Activated CD8-positive, alpha-beta T cell treated with anti-CD3 and anti-CD28 coated beads for 36 hours (primary cell): ENCODE measurements at regions of chr12 and their contacts with region 1.

Region 1: DNA sequence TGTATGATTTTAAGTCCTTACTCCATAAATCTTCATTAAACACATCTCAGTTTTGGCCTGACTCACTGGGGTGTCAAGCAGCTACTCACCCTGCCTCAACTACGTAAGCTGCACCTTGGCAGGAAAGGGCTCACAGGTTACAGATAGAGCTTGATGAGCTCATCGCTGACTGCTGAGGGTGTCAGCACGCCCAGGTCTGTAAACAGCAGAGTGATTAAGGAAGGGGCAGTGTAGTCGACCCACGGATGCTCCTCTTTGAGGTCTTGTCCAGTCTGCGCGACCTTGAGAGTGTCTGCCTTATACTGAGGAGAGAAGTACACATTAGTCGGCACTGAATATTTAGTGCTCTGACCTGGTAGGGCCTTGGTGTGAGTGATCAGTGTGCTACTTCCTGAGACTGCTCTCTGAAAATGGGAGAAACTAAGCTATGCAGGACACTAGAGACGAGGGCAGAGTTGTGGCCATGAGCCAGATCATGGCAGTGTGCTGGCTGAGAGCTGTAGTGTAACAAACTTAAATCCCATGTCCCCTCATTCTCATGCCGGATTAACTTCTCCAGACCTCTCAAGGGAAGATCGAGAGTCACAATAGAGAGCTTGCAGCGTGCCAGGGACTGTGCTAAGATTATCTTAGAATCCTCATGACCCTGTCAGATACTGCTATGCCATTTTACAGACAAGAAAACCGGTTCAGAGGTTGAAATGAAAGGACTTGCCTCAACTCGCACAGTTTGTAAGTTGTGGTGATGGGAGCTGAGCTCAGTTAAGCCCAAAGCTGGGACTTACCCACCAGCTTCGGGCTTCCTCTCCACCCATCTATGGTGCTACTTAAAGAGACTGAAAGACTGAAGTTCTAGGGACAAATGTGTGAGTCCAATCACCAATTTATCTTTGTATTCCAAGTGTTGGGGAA is 11.6 kb downstream of the EIF2B1 start:
- DNase-seq: no peak
- ATAC-seq: no peak
- H3K4me3 Mint-ChIP-seq: no peak overlapping the region
- H3K27ac Mint-ChIP-seq: peak overlapping the region; percentile 57
- H3K4me1 Mint-ChIP-seq: no peaks in the 10 kb centered on the region
- H3K27me3 Mint-ChIP-seq: no peaks in the 10 kb centered on the region
- CTCF ChIP-seq: no peak

Region 2: DNA sequence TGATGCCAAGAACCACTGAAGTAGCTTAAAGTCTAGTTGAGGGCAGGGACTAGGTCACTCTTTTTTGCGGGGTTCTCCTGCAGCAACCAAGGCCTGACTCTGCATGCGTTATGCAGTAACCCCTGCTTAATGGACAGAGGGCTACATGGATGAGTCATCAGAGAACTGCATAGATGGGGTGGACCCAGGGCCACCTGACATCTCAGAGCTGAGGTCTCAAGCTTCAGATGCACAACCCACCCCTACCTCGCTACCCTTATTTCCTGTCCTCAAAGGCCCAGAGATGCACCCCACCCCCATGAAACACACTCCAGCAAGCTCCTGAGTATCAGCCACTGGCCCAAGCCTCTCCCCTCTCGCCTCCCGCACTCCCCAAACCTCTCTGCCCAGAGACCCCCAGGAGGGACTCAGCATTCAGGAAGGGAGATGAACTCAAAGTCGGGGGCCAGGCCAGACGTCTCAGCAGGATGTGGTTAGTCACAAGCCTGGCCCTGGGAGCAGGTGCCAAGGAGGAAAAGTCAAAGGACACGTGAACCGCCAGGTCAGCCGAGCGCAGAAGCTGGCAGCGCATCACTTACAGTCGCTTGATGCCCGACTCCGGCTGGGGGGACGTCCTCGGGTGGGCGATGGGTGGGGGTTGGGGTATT is 138.2 kb before region 1 on chr12:
- CTCF ChIA-PET with region 1: no interaction called
- POLR2A ChIA-PET with region 1: no interaction called
- intact Hi-C with region 1: no loop called
- DNase-seq: peak; percentile 34
- ATAC-seq: peak; percentile 72
- H3K4me3 Mint-ChIP-seq: no peak overlapping the region
- H3K27ac Mint-ChIP-seq: peak overlapping the region; percentile 37
- H3K4me1 Mint-ChIP-seq: peaks cover 23% of the 10 kb centered on the region
- H3K27me3 Mint-ChIP-seq: no peaks in the 10 kb centered on the region
- CTCF ChIP-seq: no peak

Region 3: DNA sequence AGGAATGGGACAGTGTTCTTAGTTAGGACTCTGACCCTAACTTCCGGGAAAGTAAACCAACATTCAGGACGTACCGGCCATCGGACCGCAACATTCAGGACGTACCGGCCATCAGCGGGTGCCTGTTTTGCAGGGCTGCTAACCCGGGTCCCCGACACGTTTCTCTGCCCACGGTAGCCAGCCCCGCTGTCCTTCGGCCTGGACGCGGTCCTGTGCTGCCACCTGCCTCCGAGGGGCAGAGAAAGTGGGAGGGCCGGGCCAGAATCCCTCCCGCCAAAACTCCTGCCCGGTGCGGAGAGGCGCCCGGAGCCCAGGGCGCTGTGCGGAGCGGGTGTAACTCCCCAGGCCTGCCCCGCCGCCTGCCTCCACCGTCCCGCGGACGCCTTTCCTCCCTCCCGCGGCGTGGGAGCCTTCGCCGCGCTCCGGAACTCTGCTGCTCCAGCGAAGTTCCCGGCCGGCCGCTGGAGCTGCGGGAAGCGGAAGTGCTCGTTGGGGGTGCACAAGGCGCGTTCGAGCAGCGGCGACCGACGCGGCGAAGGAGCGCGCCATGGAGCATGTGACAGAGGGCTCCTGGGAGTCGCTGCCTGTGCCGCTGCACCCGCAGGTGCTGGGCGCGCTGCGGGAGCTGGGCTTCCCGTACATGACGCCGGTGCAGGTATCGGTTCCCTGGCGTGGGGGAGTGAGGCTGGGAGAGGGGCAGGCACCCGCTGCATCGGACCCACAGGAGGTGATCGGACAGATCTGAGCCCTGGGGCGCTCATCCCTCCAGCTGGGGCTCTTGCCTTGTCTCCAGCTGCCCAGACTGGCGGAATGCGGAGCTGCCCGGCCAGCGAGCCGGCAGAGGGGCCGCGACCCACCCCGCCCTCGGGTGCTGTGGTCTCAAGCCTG is 20.0 kb before region 1 on chr12 and contains the start of gene DDX55:
- CTCF ChIA-PET with region 1: interaction called, 4 read pairs
- POLR2A ChIA-PET with region 1: interaction called, 14 read pairs
- intact Hi-C with region 1: no loop called
- DNase-seq: peak; percentile 87
- ATAC-seq: peak; percentile 93
- H3K4me3 Mint-ChIP-seq: peak within 1 kb of the TSS; percentile 88
- H3K27ac Mint-ChIP-seq: peak within 1 kb of the TSS; percentile 91
- H3K4me1 Mint-ChIP-seq: peaks cover 32% of the 10 kb centered on the region
- H3K27me3 Mint-ChIP-seq: no peaks in the 10 kb centered on the region
- CTCF ChIP-seq: peak; percentile 30
- total RNA-seq, gene DDX55: 51.7 to 55.4 TPM

Region 4: GRCh38 chr12:123633379-123634141 is 11.7 kb after region 1 on chr12 and contains the starts of genes EIF2B1 and GTF2H3:
- CTCF ChIA-PET with region 1: interaction called, 4 read pairs
- POLR2A ChIA-PET with region 1: interaction called, 16 read pairs
- intact Hi-C with region 1: no loop called
- DNase-seq: peak; percentile 99
- ATAC-seq: peak; percentile 98
- H3K4me3 Mint-ChIP-seq: peak within 1 kb of the TSS; percentile 98
- H3K27ac Mint-ChIP-seq: peak within 1 kb of the TSS; percentile 98
- H3K4me1 Mint-ChIP-seq: peaks cover 29% of the 10 kb centered on the region
- H3K27me3 Mint-ChIP-seq: no peaks in the 10 kb centered on the region
- CTCF ChIP-seq: no peak
- total RNA-seq, gene EIF2B1: 54.5 to 61.8 TPM
- total RNA-seq, gene GTF2H3: 78.6 to 80.0 TPM

Region 5: DNA sequence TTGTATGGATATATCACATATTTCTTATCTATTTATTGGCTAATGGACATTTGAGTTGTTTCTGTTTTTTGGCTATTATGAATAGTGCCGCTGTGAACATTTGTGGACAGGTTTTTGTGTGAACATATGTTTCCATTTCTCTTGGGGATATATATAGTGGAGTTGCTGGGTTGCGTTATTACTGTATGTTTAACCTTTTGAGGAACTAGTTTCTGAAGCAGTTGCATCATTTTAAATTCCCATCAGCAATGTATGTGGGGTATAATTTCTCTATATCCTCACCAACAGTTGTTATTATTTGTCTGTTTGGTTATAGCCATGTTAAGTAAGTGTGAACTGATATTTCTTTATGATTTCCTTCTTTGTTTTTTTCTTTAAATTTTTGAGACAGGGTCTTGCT is 59.7 kb after region 1 on chr12:
- CTCF ChIA-PET with region 1: no interaction called
- POLR2A ChIA-PET with region 1: no interaction called
- intact Hi-C with region 1: no loop called
- DNase-seq: no peak
- ATAC-seq: no peak
- H3K4me3 Mint-ChIP-seq: no peak overlapping the region
- H3K27ac Mint-ChIP-seq: no peak overlapping the region
- H3K4me1 Mint-ChIP-seq: no peaks in the 10 kb centered on the region
- H3K27me3 Mint-ChIP-seq: no peaks in the 10 kb centered on the region
- CTCF ChIP-seq: no peak